B cell (primary cell): ENCODE measurements at regions of chr6 and their contacts with region 1.

Region 1: GRCh38 chr6:30541515-30542403 is 14.5 kb downstream of the GNL1 start:
- DNase-seq: peak; percentile 92
- ATAC-seq: peak; percentile 80
- H3K4me3 ChIP-seq: peak overlapping the region; percentile 44 to 73 (median 63)
- H3K4me3 Mint-ChIP-seq: peak overlapping the region; percentile 88
- H3K27ac ChIP-seq: peak overlapping the region; percentile 71 to 89
- H3K27ac Mint-ChIP-seq: peak overlapping the region; percentile 87
- H3K4me1 ChIP-seq: peaks cover 18 to 29% of the 10 kb centered on the region in 2 donors
- H3K4me1 Mint-ChIP-seq: peaks cover 30% of the 10 kb centered on the region
- H3K27me3 ChIP-seq: no peaks in the 10 kb centered on the region
- H3K27me3 Mint-ChIP-seq: no peaks in the 10 kb centered on the region
- CTCF ChIP-seq: peak; percentile 100

Region 2: GRCh38 chr6:30453508-30454116 is 88.1 kb before region 1 on chr6:
- CTCF ChIA-PET with region 1: interaction called, 18 read pairs
- POLR2A ChIA-PET with region 1: no interaction called
- intact Hi-C with region 1: loop called (anchors 1 kb)
- DNase-seq: peak; percentile 88
- ATAC-seq: peak; percentile 90
- H3K4me3 ChIP-seq: no peak overlapping the region
- H3K4me3 Mint-ChIP-seq: peak overlapping the region; percentile 69
- H3K27ac ChIP-seq: no peak overlapping the region
- H3K27ac Mint-ChIP-seq: peak overlapping the region; percentile 63
- H3K4me1 ChIP-seq: peaks cover 41 to 43% of the 10 kb centered on the region in 2 donors
- H3K4me1 Mint-ChIP-seq: peaks cover 32% of the 10 kb centered on the region
- H3K27me3 ChIP-seq: peaks cover 0 to 87% (median 62%) of the 10 kb centered on the region in 4 experiments
- H3K27me3 Mint-ChIP-seq: peaks cover 75% of the 10 kb centered on the region
- CTCF ChIP-seq: peak; percentile 83

Region 3: GRCh38 chr6:30500421-30501355 is 41.1 kb before region 1 on chr6:
- CTCF ChIA-PET with region 1: interaction called, 86 read pairs
- POLR2A ChIA-PET with region 1: interaction called, 4 read pairs
- intact Hi-C with region 1: no loop called
- DNase-seq: peak; percentile 49
- ATAC-seq: peak; percentile 52
- H3K4me3 ChIP-seq: peak overlapping the region in 3 of 5 experiments; percentile 22 to 55 (median 27)
- H3K4me3 Mint-ChIP-seq: peak overlapping the region; percentile 77
- H3K27ac ChIP-seq: peak overlapping the region in 1 of 2 donors; percentile 48
- H3K27ac Mint-ChIP-seq: peak overlapping the region; percentile 58
- H3K4me1 ChIP-seq: peaks cover 25 to 38% of the 10 kb centered on the region in 2 donors
- H3K4me1 Mint-ChIP-seq: peaks cover 46% of the 10 kb centered on the region
- H3K27me3 ChIP-seq: no peaks in the 10 kb centered on the region
- H3K27me3 Mint-ChIP-seq: no peaks in the 10 kb centered on the region
- CTCF ChIP-seq: no peak

Region 4: GRCh38 chr6:30565772-30566171 is 24.0 kb after region 1 on chr6:
- CTCF ChIA-PET with region 1: interaction called, 22 read pairs
- POLR2A ChIA-PET with region 1: no interaction called
- intact Hi-C with region 1: no loop called
- DNase-seq: no peak
- ATAC-seq: no peak
- H3K4me3 ChIP-seq: no peak overlapping the region
- H3K4me3 Mint-ChIP-seq: no peak overlapping the region
- H3K27ac ChIP-seq: no peak overlapping the region
- H3K27ac Mint-ChIP-seq: no peak overlapping the region
- H3K4me1 ChIP-seq: peaks cover 6 to 9% of the 10 kb centered on the region in 2 donors
- H3K4me1 Mint-ChIP-seq: peaks cover 14% of the 10 kb centered on the region
- H3K27me3 ChIP-seq: no peaks in the 10 kb centered on the region
- H3K27me3 Mint-ChIP-seq: no peaks in the 10 kb centered on the region
- CTCF ChIP-seq: no peak

Region 5: GRCh38 chr6:30600451-30600961 is 58.7 kb after region 1 on chr6:
- CTCF ChIA-PET with region 1: interaction called, 154 read pairs
- POLR2A ChIA-PET with region 1: interaction called, 6 read pairs
- intact Hi-C with region 1: loop called (anchors 2 kb)
- DNase-seq: no peak
- ATAC-seq: no peak
- H3K4me3 ChIP-seq: no peak overlapping the region
- H3K4me3 Mint-ChIP-seq: no peak overlapping the region
- H3K27ac ChIP-seq: no peak overlapping the region
- H3K27ac Mint-ChIP-seq: no peak overlapping the region
- H3K4me1 ChIP-seq: peaks cover 0 to 6% of the 10 kb centered on the region in 2 donors
- H3K4me1 Mint-ChIP-seq: peaks cover 6% of the 10 kb centered on the region
- H3K27me3 ChIP-seq: no peaks in the 10 kb centered on the region
- H3K27me3 Mint-ChIP-seq: no peaks in the 10 kb centered on the region
- CTCF ChIP-seq: no peak

Region 6: GRCh38 chr6:30717042-30717844 is 175.5 kb after region 1 on chr6 and contains the start of gene MDC1:
- CTCF ChIA-PET with region 1: interaction called, 20 read pairs
- POLR2A ChIA-PET with region 1: interaction called, 4 read pairs
- intact Hi-C with region 1: no loop called
- DNase-seq: peak; percentile 100
- ATAC-seq: peak; percentile 70
- H3K4me3 ChIP-seq: peak within 1 kb of the TSS; percentile 71 to 82 (median 80)
- H3K4me3 Mint-ChIP-seq: peak within 1 kb of the TSS; percentile 96
- H3K27ac ChIP-seq: peak within 1 kb of the TSS; percentile 91 to 94
- H3K27ac Mint-ChIP-seq: peak within 1 kb of the TSS; percentile 99
- H3K4me1 ChIP-seq: peaks cover 23 to 33% of the 10 kb centered on the region in 2 donors
- H3K4me1 Mint-ChIP-seq: peaks cover 40% of the 10 kb centered on the region
- H3K27me3 ChIP-seq: no peaks in the 10 kb centered on the region
- H3K27me3 Mint-ChIP-seq: no peaks in the 10 kb centered on the region
- CTCF ChIP-seq: peak; percentile 50
- total RNA-seq, gene MDC1: 69.3 and 87.4 TPM in 2 replicates

Region 7: GRCh38 chr6:30963641-30964040 is 421.9 kb after region 1 on chr6:
- CTCF ChIA-PET with region 1: no interaction called
- POLR2A ChIA-PET with region 1: no interaction called
- intact Hi-C with region 1: no loop called
- DNase-seq: no peak
- ATAC-seq: no peak
- H3K4me3 ChIP-seq: no peak overlapping the region
- H3K4me3 Mint-ChIP-seq: no peak overlapping the region
- H3K27ac ChIP-seq: no peak overlapping the region
- H3K27ac Mint-ChIP-seq: no peak overlapping the region
- H3K4me1 ChIP-seq: no peaks in the 10 kb centered on the region
- H3K4me1 Mint-ChIP-seq: no peaks in the 10 kb centered on the region
- H3K27me3 ChIP-seq: peaks cover 0 to 20% (median 0%) of the 10 kb centered on the region in 4 experiments
- H3K27me3 Mint-ChIP-seq: peaks cover 46% of the 10 kb centered on the region
- CTCF ChIP-seq: no peak